Endothelial cell of umbilical vein (primary cell): ENCODE measurements at regions of chr2 and their contacts with region 1.

Region 1: GRCh38 chr2:194545978-194546377 is 1111.0 kb upstream of the SLC39A10 start:
- DNase-seq: peak; percentile 40
- H3K4me3 ChIP-seq: no peak overlapping the region
- H3K27ac ChIP-seq: no peak overlapping the region
- H3K4me1 ChIP-seq: peaks cover 2% of the 10 kb centered on the region
- H3K27me3 ChIP-seq: no peaks in the 10 kb centered on the region
- CTCF ChIP-seq: peak in 1 of 2 donors; percentile 6
- POLR2A ChIP-seq: no peak

Region 2: DNA sequence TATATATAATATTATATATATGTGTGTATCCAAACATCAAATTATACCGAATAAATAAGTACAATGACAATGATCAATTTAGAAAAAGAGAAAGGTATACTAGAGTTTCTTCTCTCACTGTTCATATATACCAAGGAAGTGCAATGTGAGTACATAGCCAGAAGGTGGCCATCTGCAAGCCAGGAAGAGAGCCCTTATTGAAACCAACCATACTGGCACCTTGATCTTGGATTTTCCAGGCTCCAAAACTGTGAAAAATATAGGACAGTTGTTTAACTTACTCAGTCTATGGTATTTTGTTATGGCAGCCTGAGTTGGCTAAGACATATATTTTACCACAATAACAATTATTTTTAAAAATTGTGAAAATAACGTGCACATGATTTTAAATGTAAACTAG is 379.2 kb before region 1 on chr2:
- CTCF ChIA-PET with region 1: no interaction called
- POLR2A ChIA-PET with region 1: no interaction called
- dilution Hi-C with region 1: no loop called
- intact Hi-C with region 1: loop called (anchors 10 kb)
- DNase-seq: peak; percentile 6
- H3K4me3 ChIP-seq: no peak overlapping the region
- H3K27ac ChIP-seq: no peak overlapping the region
- H3K4me1 ChIP-seq: no peaks in the 10 kb centered on the region
- H3K27me3 ChIP-seq: no peaks in the 10 kb centered on the region
- CTCF ChIP-seq: peak; percentile 27 to 38
- POLR2A ChIP-seq: no peak

Region 3: DNA sequence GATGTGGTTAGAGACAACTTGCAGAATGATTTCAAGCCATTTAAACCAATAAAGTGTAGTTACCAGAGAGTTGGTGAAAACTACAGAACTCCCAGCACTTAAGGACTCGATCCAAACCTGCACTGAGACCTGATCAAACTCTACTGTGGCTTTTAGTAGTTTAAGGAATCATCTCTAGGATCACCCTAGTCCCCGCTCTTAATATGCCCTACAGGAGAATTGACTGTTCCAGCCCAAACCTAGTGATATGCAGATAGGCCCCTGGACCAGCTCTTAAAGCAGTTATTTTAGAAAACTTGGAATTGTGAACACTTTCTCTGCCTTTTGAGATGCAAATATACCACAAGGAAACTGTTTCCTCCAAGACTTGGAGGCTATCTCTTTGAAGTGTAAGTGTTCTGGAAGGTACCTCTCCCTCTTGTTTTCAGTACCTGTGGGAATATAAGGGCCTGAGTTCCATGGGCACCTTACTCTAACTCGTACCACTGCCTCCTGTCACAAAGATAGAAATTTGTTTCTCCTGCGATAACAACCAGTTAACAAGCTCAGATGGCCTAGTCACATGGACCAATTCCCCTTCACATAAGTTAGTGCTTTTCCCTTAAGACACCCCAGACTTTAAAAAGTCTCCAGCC is 256.1 kb before region 1 on chr2:
- CTCF ChIA-PET with region 1: no interaction called
- POLR2A ChIA-PET with region 1: no interaction called
- dilution Hi-C with region 1: no loop called
- intact Hi-C with region 1: no loop called
- DNase-seq: no peak
- H3K4me3 ChIP-seq: no peak overlapping the region
- H3K27ac ChIP-seq: no peak overlapping the region
- H3K4me1 ChIP-seq: no peaks in the 10 kb centered on the region
- H3K27me3 ChIP-seq: no peaks in the 10 kb centered on the region
- CTCF ChIP-seq: no peak
- POLR2A ChIP-seq: no peak

Region 4: DNA sequence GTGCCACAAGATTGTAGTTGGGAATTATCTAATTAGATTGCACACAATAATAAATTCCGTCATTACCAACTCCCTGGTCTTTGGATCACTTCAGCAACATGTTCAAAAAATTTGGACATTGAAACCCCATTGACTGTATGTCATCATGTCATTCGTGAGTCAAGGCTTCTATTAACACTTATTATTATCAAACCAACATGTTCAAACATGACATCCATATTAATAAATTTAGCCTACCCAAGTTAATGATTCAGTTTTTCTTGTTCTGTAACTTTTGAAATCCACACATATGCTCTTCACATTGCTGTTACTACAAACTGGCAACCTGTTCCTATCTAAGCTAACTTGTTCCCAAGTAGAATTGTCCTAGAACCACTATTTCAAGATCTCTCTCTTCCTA is 31.7 kb before region 1 on chr2:
- CTCF ChIA-PET with region 1: no interaction called
- POLR2A ChIA-PET with region 1: no interaction called
- dilution Hi-C with region 1: no loop called
- intact Hi-C with region 1: no loop called
- DNase-seq: no peak
- H3K4me3 ChIP-seq: no peak overlapping the region
- H3K27ac ChIP-seq: no peak overlapping the region
- H3K4me1 ChIP-seq: no peaks in the 10 kb centered on the region
- H3K27me3 ChIP-seq: no peaks in the 10 kb centered on the region
- CTCF ChIP-seq: no peak
- POLR2A ChIP-seq: no peak

Region 5: GRCh38 chr2:194559964-194560363 is 14.0 kb after region 1 on chr2:
- CTCF ChIA-PET with region 1: interaction called, 18 read pairs
- POLR2A ChIA-PET with region 1: no interaction called
- dilution Hi-C with region 1: no loop called
- intact Hi-C with region 1: no loop called
- DNase-seq: no peak
- H3K4me3 ChIP-seq: no peak overlapping the region
- H3K27ac ChIP-seq: no peak overlapping the region
- H3K4me1 ChIP-seq: no peaks in the 10 kb centered on the region
- H3K27me3 ChIP-seq: no peaks in the 10 kb centered on the region
- CTCF ChIP-seq: peak in 1 of 2 donors; percentile 20
- POLR2A ChIP-seq: no peak